Activated CD4-positive, alpha-beta T cell treated with anti-CD3 and anti-CD28 coated beads for 36 hours (primary cell): ENCODE measurements at regions of chr4 and their contacts with region 1.

Region 1: DNA sequence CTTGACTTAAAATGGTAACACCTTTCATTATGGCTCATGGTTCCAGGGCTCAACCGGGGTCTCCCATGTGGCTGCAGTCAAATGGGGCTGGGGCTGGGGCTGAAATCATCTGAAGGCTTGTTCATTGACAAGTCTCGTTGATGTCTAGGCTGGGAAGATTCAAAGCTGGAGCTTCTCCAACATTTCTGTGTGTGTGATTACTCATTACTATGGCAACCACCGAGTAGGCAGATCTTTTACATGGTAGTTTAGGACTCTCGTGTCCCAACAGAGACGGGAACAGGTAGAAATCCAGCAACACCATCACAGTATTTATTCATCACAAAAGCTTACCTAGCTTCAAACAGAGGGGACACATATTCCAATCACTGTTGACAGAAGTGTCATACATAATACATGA is 7.8 kb downstream of the YTHDC1 start:
- DNase-seq: no peak
- ATAC-seq: no peak
- H3K4me3 Mint-ChIP-seq: peak overlapping the region; percentile 24
- H3K27ac Mint-ChIP-seq: peak overlapping the region; percentile 40
- H3K4me1 Mint-ChIP-seq: peaks cover 71% of the 10 kb centered on the region
- H3K27me3 Mint-ChIP-seq: no peaks in the 10 kb centered on the region

Region 2: DNA sequence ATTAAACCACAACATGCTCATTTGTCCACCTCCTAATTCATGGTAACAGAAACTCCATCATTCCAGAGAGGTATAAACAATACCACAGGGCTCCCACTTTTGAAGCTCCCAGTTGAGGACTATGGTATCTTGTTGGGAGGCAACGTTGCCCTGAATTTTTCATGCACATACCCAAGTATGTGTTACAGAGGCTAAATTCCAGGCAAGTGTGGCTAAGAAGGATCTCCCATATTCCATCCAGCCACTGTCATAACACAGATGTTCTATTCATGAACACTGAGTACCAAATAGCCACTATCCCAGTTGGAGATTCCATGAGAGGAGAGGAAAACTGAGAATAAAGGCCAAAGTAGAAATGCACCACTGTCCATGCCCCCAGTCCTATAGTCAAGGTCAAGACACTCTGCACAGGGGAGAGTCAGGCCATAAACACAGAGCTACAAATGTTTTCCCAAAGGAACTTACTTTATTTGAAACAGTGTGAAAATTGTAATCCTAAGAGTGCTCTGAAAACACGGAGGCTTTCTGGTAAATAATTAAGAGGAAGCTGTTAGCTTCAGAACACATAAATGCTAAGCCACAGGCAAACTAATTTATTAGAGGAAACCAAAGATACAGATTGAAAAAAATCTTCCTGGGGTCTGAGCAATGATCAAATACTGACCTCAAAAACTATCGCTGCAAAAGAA is 54.3 kb before region 1 on chr4:
- CTCF ChIA-PET with region 1: no interaction called
- POLR2A ChIA-PET with region 1: no interaction called
- intact Hi-C with region 1: no loop called
- DNase-seq: no peak
- ATAC-seq: no peak
- H3K4me3 Mint-ChIP-seq: no peak overlapping the region
- H3K27ac Mint-ChIP-seq: no peak overlapping the region
- H3K4me1 Mint-ChIP-seq: no peaks in the 10 kb centered on the region
- H3K27me3 Mint-ChIP-seq: peaks cover 5% of the 10 kb centered on the region

Region 3: DNA sequence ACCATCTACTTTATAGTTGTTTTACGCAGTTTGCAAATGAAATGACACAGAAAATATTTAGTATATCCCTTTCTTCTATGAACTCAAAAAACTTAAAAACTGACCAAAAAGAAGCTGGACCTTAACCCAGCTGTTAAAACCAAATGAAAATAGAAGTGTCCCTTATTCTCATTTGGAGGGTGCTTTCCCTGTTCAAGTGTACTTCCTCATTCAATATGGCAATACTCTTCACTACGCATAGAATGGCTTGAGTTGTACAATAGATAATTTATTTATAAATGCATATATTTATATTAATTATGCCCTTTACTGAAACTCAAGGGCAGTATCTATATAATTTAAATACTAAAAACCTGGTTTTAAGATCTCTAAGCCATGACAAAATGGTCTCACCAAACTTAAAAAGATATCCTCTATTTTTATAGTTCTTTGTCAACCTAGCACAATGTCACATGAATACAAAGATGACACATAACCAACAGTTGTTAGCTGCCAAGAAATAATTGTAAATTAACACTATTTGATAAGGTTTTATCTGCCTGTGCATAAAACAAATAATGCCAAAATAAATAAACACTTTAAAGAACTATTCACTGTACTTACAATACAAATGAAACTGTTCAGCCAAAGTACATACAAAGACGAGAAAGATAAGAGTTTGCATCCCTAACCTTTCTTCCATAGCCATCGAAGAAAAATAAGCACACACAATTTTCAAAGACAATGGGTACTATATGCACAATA is 17.4 kb before region 1 on chr4:
- CTCF ChIA-PET with region 1: no interaction called
- POLR2A ChIA-PET with region 1: interaction called, 15 read pairs
- intact Hi-C with region 1: loop called in 1 of 2 experiments (anchors 2 kb)
- DNase-seq: no peak
- ATAC-seq: no peak
- H3K4me3 Mint-ChIP-seq: no peak overlapping the region
- H3K27ac Mint-ChIP-seq: no peak overlapping the region
- H3K4me1 Mint-ChIP-seq: no peaks in the 10 kb centered on the region
- H3K27me3 Mint-ChIP-seq: no peaks in the 10 kb centered on the region

Region 4: DNA sequence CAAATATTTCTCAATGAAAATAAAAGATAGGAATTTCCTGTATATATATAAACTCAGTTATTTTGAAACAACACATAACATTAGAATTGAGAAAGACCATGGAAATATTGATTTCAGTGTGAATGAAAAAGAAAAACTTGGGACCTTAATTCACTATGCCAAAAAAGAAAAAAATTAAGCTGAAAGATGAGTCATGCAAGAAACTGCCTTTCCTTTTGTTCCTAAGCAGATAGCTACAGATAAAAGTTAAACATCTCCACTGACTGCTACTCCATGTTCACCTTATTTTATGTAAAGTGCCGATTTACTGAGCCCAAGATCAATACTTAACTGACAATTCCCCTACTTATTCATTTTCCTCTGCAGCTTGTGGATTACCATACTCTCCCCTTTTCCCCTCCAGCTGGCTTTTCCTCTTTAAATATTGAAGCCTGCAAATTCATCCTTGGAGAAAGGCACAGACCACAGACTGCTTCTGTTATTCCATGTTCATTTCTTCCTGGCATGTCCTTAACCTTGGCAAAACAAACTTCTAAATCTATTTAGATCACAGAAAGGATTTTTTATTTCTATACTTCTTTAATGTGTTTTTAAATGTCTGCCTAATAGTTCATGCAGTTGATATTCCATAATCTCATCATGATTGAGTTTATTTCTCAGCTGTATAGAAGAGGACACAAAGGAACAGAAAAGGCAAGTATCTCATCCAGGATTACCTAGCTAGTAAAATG is 48.2 kb after region 1 on chr4:
- CTCF ChIA-PET with region 1: no interaction called
- POLR2A ChIA-PET with region 1: no interaction called
- intact Hi-C with region 1: no loop called
- DNase-seq: no peak
- ATAC-seq: no peak
- H3K4me3 Mint-ChIP-seq: no peak overlapping the region
- H3K27ac Mint-ChIP-seq: no peak overlapping the region
- H3K4me1 Mint-ChIP-seq: no peaks in the 10 kb centered on the region
- H3K27me3 Mint-ChIP-seq: no peaks in the 10 kb centered on the region

Region 5: DNA sequence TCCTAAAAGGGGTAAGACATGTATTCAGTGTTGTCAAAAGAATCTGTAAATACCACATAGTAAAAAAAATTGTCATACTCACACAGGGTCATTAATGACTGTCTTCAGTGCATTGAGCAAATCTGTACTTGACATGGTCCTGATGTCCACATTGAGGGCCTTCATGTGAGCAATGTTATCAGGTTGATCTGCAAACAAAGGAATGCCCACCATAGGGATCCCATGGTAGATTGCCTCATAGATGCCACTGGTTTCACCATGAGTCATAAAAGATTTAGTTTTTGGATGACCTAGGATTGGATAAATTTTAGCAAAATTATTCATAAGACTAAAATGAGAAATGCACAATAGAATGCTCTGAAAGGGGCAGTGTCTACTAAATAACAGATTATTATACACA is 366.4 kb after region 1 on chr4:
- CTCF ChIA-PET with region 1: no interaction called
- POLR2A ChIA-PET with region 1: no interaction called
- intact Hi-C with region 1: no loop called
- DNase-seq: no peak
- ATAC-seq: no peak
- H3K4me3 Mint-ChIP-seq: no peak overlapping the region
- H3K27ac Mint-ChIP-seq: no peak overlapping the region
- H3K4me1 Mint-ChIP-seq: no peaks in the 10 kb centered on the region
- H3K27me3 Mint-ChIP-seq: no peaks in the 10 kb centered on the region